ENCODE measurements at regions of chr1 and their contacts with region 1.

Region 1: GRCh38 chr1:119613769-119614720 is 34.0 kb downstream of the ZNF697 start:
- DNase-seq: peak; percentile 45
- H3K4me3 ChIP-seq: no peak overlapping the region
- CTCF ChIP-seq: peak; percentile 84

Region 2: GRCh38 chr1:119603695-119604094 is 10.3 kb before region 1 on chr1:
- CTCF ChIA-PET with region 1: interaction called, 46 read pairs
- POLR2A ChIA-PET with region 1: no interaction called
- DNase-seq: no peak
- H3K4me3 ChIP-seq: no peak overlapping the region
- CTCF ChIP-seq: no peak

Region 3: GRCh38 chr1:119631433-119632102 is 17.5 kb after region 1 on chr1:
- CTCF ChIA-PET with region 1: interaction called, 46 read pairs
- POLR2A ChIA-PET with region 1: no interaction called
- DNase-seq: no peak
- H3K4me3 ChIP-seq: peak overlapping the region; percentile 37
- CTCF ChIP-seq: no peak

Region 4: GRCh38 chr1:119647734-119648619 is 33.9 kb after region 1 on chr1 and contains the start of gene ZNF697:
- CTCF ChIA-PET with region 1: interaction called, 1,203 read pairs
- POLR2A ChIA-PET with region 1: interaction called, 3 read pairs
- DNase-seq: peak; percentile 93
- H3K4me3 ChIP-seq: peak within 1 kb of the TSS; percentile 86
- CTCF ChIP-seq: peak; percentile 50

Measured in AG04449 (cell line).